Activated naive CD4-positive, alpha-beta T cell treated with anti-CD3 and anti-CD28 coated beads for 36 hours (primary cell): ENCODE measurements at regions of chr11 and their contacts with region 1.

Region 1: DNA sequence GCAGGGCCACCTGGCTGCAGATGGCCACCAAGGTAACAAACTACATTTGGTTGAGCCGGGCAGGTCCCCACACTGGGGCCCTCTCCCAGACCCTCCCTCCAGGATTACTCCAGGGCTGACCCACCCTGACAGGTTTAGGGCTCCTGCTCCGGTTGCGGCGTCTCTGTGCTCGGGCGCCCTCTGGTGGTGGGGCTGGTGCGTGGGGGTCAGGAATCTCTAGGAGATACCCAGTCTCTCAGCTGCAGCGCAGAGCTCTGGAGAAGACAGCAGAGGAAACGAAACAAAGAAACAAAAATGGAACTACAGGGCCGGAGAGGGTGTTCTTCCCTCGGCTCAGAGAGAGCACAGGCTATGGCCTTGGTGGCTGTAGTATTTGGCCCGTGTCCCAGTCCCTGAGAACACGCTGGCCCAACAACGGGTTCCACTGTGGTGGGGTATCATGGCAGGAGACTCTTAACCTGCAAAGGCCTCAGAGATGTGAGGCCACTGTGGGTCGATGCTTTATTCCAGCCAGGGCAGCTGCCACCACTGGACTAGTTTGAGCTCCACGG is 2.4 kb downstream of the C11orf96 start:
- DNase-seq: peak; percentile 83
- H3K4me3 Mint-ChIP-seq: peak overlapping the region; percentile 17
- H3K27ac Mint-ChIP-seq: no peak overlapping the region
- H3K4me1 Mint-ChIP-seq: peaks cover 15% of the 10 kb centered on the region
- H3K27me3 Mint-ChIP-seq: peaks cover 54% of the 10 kb centered on the region

Region 2: GRCh38 chr11:43567396-43567975 is 377.4 kb before region 1 on chr11:
- CTCF ChIA-PET with region 1: no interaction called
- intact Hi-C with region 1: loop called (anchors 5 kb)
- DNase-seq: no peak
- H3K4me3 Mint-ChIP-seq: no peak overlapping the region
- H3K27ac Mint-ChIP-seq: no peak overlapping the region
- H3K4me1 Mint-ChIP-seq: no peaks in the 10 kb centered on the region
- H3K27me3 Mint-ChIP-seq: peaks cover 61% of the 10 kb centered on the region

Region 3: DNA sequence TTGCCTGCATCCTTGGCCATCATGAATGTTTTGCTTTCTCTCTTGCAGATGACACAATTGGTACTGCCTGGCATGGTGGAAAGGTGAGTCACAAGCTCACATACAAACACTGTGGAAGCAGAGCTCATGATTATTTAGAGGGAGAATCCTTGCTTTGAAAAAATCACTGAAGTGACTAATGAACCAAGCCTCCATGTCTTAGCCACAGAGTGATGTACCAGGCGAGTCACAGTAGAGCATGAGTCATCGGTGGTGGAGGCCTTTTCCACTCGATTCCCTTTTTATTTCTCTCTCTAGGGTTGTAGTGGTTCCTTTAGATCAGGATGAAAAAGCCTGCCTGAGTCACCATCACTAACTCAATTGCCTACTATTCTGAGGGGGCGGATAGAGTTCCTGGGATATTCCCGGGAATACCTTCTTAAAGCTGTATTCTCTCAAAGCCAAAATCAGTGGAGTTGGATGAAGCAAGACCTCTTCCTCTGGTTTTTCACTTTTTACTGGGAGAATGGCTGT is 113.9 kb before region 1 on chr11:
- CTCF ChIA-PET with region 1: no interaction called
- intact Hi-C with region 1: loop called (anchors 2 kb)
- DNase-seq: peak; percentile 80
- H3K4me3 Mint-ChIP-seq: no peak overlapping the region
- H3K27ac Mint-ChIP-seq: peak overlapping the region; percentile 86
- H3K4me1 Mint-ChIP-seq: peaks cover 15% of the 10 kb centered on the region
- H3K27me3 Mint-ChIP-seq: no peaks in the 10 kb centered on the region

Region 4: GRCh38 chr11:43895601-43896000 is 49.2 kb before region 1 on chr11:
- CTCF ChIA-PET with region 1: interaction called, 24 read pairs
- intact Hi-C with region 1: loop called (anchors 1 kb)
- DNase-seq: no peak
- H3K4me3 Mint-ChIP-seq: no peak overlapping the region
- H3K27ac Mint-ChIP-seq: no peak overlapping the region
- H3K4me1 Mint-ChIP-seq: no peaks in the 10 kb centered on the region
- H3K27me3 Mint-ChIP-seq: no peaks in the 10 kb centered on the region

Region 5: DNA sequence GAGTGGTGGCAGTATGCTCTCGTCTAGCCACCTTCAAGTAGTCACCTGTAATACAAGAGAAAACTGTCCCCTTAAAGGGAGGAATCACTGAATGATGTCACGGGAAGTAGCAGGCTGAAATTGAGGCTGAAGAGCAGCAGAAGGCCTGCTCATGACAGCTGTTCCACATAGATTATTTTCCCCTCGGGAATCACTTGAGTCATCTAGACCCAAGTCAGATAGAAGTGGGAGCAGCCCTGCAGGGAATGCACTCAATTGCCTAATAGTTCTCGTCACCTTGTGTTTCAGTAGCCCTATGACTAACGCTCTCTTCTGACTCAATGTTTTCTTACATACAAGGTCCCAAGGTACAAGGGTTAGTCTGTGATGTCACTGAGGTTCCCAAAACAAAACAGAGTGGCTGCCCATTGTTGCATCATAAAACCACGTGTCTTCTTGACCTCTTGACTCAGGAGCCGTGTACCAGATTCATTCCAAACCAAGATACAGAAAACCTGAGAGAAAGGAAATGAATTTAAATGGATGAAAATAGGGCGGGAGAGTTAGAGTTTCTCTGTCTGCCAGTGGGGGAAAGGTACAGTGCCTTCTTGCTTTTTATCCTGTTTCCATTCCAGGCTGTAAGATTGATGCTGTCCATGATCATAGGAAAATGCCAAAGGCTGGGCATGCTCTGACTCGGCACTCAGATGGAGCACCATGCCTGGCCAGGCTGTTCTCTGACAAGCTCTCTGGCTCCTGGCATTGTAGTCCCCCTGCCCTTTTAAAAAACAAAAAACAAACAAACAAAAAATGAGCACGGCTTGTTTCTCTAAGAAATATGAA is 24.0 kb before region 1 on chr11:
- CTCF ChIA-PET with region 1: interaction called, 5 read pairs
- intact Hi-C with region 1: loop called (anchors 2 kb)
- DNase-seq: peak; percentile 68
- H3K4me3 Mint-ChIP-seq: no peak overlapping the region
- H3K27ac Mint-ChIP-seq: peak overlapping the region; percentile 26
- H3K4me1 Mint-ChIP-seq: peaks cover 14% of the 10 kb centered on the region
- H3K27me3 Mint-ChIP-seq: no peaks in the 10 kb centered on the region

Region 6: DNA sequence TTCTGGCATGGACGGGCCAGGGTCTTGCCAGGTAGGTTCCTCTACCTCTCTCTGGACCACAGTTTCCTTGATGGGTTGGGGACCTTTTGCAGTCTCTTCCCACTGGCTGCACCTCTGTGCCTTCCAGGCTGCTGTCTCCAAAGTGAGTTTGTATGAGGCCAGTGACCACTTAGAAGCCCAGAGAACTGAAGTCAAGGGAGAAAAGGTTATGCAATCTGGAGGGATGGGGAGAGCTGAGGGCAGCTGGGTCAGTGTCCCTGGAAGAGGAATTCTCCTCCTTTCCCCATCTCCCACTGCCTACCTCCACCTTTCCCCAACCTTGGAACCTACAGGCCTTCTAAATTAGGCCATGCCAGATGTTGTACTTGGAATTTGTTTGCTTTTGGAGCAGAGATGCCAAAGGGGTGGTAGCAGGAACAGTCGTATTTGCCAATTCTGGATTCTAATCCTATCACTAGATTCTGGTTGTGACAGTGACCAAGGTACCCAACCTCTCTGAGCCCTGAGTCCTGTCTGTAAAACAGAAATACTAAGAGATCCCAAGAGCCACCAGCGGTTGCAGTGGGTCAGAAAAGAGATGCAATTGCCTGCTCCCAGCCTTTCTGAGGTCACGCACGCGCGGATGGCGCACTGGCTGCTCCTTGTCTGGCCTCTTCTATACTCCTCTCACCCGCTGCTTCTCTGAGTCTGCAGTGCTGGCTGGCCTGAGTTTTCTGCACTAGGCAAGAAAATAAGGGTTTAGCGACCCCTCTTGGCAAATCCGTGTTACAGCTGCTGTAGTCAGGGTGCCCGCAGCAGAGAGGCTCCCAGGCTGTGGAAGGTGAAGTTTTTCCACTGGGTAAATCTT is 92.2 kb after region 1 on chr11:
- CTCF ChIA-PET with region 1: no interaction called
- intact Hi-C with region 1: loop called (anchors 1 kb)
- DNase-seq: peak; percentile 60
- H3K4me3 Mint-ChIP-seq: no peak overlapping the region
- H3K27ac Mint-ChIP-seq: no peak overlapping the region
- H3K4me1 Mint-ChIP-seq: no peaks in the 10 kb centered on the region
- H3K27me3 Mint-ChIP-seq: peaks cover 8% of the 10 kb centered on the region

Region 7: GRCh38 chr11:44065841-44066731 is 121.2 kb after region 1 on chr11 and contains the start of gene ACCS:
- CTCF ChIA-PET with region 1: interaction called, 6 read pairs
- intact Hi-C with region 1: loop called (anchors 2 kb)
- DNase-seq: peak; percentile 92
- H3K4me3 Mint-ChIP-seq: peak within 1 kb of the TSS; percentile 88
- H3K27ac Mint-ChIP-seq: peak within 1 kb of the TSS; percentile 93
- H3K4me1 Mint-ChIP-seq: peaks cover 20% of the 10 kb centered on the region
- H3K27me3 Mint-ChIP-seq: no peaks in the 10 kb centered on the region
- total RNA-seq, gene ACCS: 16.2 to 16.6 TPM

Region 8: GRCh38 chr11:44159848-44160721 is 215.2 kb after region 1 on chr11:
- CTCF ChIA-PET with region 1: no interaction called
- intact Hi-C with region 1: no loop called
- DNase-seq: no peak
- H3K4me3 Mint-ChIP-seq: no peak overlapping the region
- H3K27ac Mint-ChIP-seq: no peak overlapping the region
- H3K4me1 Mint-ChIP-seq: peaks cover 14% of the 10 kb centered on the region
- H3K27me3 Mint-ChIP-seq: no peaks in the 10 kb centered on the region

Region 9: DNA sequence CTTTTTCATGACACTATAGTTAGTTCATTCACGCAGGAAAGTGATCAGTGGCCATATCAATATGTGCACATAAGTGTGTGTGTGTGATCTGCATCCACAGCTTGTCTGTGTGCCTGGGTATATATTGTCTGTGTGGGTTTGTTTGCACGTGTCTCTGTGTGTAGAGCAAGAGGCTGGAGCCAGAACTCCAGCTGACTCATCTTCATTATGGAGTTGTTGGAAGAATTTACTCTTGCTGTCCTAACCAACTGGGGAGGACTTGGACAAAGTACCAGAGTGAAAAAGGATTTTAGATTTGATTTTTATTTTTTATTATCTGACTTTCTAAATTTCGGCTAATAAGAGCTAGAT is 941.9 kb after region 1 on chr11:
- CTCF ChIA-PET with region 1: no interaction called
- intact Hi-C with region 1: no loop called
- DNase-seq: no peak
- H3K4me3 Mint-ChIP-seq: no peak overlapping the region
- H3K27ac Mint-ChIP-seq: no peak overlapping the region
- H3K4me1 Mint-ChIP-seq: no peaks in the 10 kb centered on the region
- H3K27me3 Mint-ChIP-seq: no peaks in the 10 kb centered on the region